ENCODE measurements at regions of chr5 and their contacts with region 1.

Region 1: DNA sequence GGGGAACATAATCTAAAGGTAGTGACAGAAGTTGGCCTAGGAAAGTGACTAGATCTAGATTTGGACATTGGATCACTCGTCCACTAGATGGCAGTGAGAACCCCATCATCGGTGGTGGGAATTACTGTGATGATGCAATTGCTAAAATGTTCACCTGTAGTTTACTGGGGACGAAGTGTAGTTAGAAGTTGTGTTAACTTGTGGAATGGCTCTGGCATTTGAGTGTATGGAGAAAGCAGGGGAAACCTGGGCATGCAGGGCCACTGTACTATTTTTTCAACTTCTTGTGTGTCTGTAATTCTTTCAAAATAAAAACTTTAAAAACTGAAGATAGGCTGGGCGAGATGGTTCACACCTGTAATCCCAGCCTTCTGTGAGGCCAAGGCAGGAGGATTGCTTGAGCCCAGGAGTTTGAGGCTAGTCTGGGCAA is 75.5 kb downstream of the PHAX start:
- DNase-seq: peak; percentile 57 to 88
- H3K4me3 ChIP-seq: no peak overlapping the region
- H3K27ac ChIP-seq: no peak overlapping the region
- H3K4me1 ChIP-seq: no peaks in the 10 kb centered on the region
- H3K27me3 ChIP-seq: peaks cover 0 to 6% (median 0%) of the 10 kb centered on the region in 3 donors
- CTCF ChIP-seq: peak in 5 of 7 experiments; percentile 48 to 80 (median 73)
- EP300 ChIP-seq: no peak
- POLR2A ChIP-seq: no peak

Region 2: DNA sequence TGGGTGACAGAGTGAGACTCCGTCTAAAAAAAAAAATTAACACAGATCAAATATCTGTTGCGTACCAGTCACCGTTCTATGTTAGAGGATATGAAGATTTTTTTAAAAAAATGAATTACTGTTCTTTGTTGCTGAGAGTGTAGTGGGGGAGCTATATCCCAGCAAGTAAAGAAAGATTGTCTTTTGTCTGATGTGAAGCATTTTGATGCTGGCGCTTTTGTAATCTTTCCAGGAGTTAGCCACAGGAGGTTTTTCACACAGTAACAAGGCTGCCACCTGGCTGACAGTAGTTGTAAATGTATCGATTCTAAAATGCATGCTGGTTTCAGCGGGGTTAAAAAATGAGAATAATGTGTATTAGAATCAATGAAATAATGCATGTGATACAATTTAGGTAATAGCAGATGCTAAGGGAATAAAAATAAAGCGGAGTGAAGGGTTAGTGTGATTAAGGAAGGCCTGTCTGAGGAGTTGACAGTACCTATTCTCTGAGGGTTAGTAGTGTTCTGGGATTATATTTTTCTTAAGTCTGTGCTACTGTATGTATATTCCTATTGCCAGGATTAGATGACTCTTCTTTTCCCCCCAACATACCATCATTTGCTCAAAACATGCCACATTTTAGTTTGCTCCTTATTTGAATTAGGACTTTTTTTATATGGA is 104.1 kb after region 1 on chr5:
- intact Hi-C with region 1: loop called (anchors 5 kb)
- DNase-seq: peak; percentile 38 to 85
- H3K4me3 ChIP-seq: peak overlapping the region in 1 of 4 donors; percentile 13
- H3K27ac ChIP-seq: no peak overlapping the region
- H3K4me1 ChIP-seq: peaks cover 6 to 37% (median 36%) of the 10 kb centered on the region in 4 donors
- H3K27me3 ChIP-seq: no peaks in the 10 kb centered on the region
- CTCF ChIP-seq: peak in 5 of 7 experiments; percentile 29 to 81 (median 56)
- EP300 ChIP-seq: no peak
- POLR2A ChIP-seq: no peak

Region 3: DNA sequence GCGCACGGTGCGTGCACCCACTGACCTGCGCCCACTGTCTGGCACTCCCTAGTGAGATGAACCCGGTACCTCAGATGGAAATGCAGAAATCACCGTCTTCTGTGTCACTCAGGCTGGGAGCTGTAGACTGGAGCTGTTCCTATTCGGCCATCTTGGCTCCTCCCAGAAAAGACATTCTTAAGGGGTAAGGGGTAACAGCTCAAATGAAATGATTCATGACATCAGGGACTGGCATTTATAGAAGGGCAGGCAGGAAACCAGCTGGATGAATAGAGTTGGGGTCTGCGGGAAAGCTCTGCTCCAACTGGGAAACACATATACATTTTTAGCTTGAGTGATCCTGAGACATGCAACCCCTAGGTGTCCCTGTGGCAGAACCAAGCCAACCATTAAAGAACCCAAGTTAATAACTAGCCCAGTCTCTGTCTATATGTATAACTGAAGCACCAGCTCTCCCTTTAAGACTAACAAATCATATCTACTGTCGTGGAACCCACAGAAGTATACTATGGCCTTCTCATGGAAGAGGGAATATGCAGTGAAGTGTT is 220.0 kb after region 1 on chr5:
- intact Hi-C with region 1: no loop called
- DNase-seq: no peak
- H3K4me3 ChIP-seq: no peak overlapping the region
- H3K27ac ChIP-seq: no peak overlapping the region
- H3K4me1 ChIP-seq: no peaks in the 10 kb centered on the region
- H3K27me3 ChIP-seq: no peaks in the 10 kb centered on the region
- CTCF ChIP-seq: no peak
- EP300 ChIP-seq: no peak
- POLR2A ChIP-seq: no peak